Aorta (tissue), 5 donors: ENCODE measurements at regions of chr9 and their contacts with region 1.

Region 1: GRCh38 chr9:113993838-113994540 is 84.1 kb downstream of the AMBP start:
- DNase-seq: peak; percentile 95
- ATAC-seq: peak; percentile 69
- H3K4me3 ChIP-seq: no peak overlapping the region
- H3K27ac ChIP-seq: no peak overlapping the region
- H3K4me1 ChIP-seq: peaks cover 0 to 8% of the 10 kb centered on the region in 2 donors
- H3K27me3 ChIP-seq: no peaks in the 10 kb centered on the region

Region 2: GRCh38 chr9:112546149-112547012 is 1447.6 kb before region 1 on chr9:
- intact Hi-C with region 1: no loop called
- DNase-seq: no peak
- ATAC-seq: no peak
- H3K4me3 ChIP-seq: no peak overlapping the region
- H3K27ac ChIP-seq: no peak overlapping the region
- H3K4me1 ChIP-seq: peaks cover 0 to 2% of the 10 kb centered on the region in 2 donors
- H3K27me3 ChIP-seq: no peaks in the 10 kb centered on the region

Region 3: DNA sequence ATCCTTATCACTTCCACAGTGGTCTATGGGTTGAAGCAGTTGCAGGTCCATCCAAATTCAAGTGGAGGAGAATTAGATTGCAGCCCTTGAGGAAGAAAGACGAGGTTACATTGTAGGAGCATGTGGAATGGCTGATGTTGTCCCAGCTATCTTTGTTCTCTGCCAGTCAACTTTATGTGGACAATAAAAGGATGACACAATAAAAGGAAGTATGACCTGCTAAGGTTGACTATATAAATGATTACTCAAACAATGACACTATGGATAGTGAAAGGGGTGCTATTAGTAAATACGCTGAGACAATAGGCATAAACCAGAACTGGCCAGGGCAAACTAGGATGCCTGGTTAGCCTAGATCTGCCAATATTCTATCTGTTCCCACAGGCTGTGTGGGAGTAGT is 130.6 kb before region 1 on chr9:
- intact Hi-C with region 1: no loop called
- DNase-seq: no peak
- ATAC-seq: no peak
- H3K4me3 ChIP-seq: no peak overlapping the region
- H3K27ac ChIP-seq: no peak overlapping the region
- H3K4me1 ChIP-seq: no peaks in the 10 kb centered on the region
- H3K27me3 ChIP-seq: no peaks in the 10 kb centered on the region

Region 4: GRCh38 chr9:113919382-113919781 is 74.6 kb before region 1 on chr9:
- intact Hi-C with region 1: loop called in 1 of 2 experiments (anchors 5 kb)
- DNase-seq: peak in 1 of 2 donors; percentile 55
- ATAC-seq: peak; percentile 34
- H3K4me3 ChIP-seq: no peak overlapping the region
- H3K27ac ChIP-seq: no peak overlapping the region
- H3K4me1 ChIP-seq: peaks cover 0 to 7% of the 10 kb centered on the region in 2 donors
- H3K27me3 ChIP-seq: no peaks in the 10 kb centered on the region

Region 5: DNA sequence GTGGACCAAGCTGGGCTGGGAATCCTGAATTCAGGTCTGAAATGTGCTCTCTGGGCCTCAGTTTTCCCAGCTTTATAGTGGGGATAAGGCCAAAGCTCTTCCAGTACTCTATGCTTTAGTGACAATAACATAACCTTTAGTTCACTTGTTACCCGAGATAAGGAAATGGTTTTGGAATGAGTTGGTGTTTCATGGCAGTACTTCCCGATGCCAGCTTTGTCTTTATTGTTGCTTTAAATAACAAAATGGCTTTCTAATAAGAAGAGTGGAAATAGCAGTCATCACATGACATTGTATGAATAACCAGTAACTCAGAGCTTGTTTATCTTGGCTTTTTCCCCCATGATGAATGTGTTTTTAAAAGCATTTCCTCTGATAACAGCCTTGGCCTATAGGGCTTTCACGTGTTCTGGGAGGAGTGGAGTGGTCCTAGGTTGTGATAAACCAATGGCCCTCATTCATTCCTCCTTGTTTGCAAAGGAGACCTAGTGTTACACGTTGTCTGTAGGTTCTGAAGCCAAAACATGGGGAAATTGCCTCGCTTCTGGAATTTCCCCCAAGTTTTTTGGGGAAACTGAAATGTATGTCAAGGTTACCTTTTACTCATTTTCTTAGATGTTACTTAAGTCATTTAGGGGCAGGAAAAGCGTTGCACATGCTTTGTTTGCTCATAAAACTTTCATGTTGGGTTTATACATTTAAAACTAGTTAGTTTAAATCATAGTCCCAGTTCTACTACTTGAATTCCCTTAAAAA is 64.2 kb before region 1 on chr9:
- intact Hi-C with region 1: loop called in 1 of 2 experiments (anchors 5 kb)
- DNase-seq: no peak
- ATAC-seq: peak; percentile 71
- H3K4me3 ChIP-seq: no peak overlapping the region
- H3K27ac ChIP-seq: peak overlapping the region; percentile 12 to 64
- H3K4me1 ChIP-seq: peaks cover 4 to 15% of the 10 kb centered on the region in 2 donors
- H3K27me3 ChIP-seq: no peaks in the 10 kb centered on the region

Region 6: GRCh38 chr9:113957821-113958341 is 36.1 kb before region 1 on chr9:
- intact Hi-C with region 1: loop called (anchors 5 kb)
- DNase-seq: no peak
- ATAC-seq: no peak
- H3K4me3 ChIP-seq: no peak overlapping the region
- H3K27ac ChIP-seq: no peak overlapping the region
- H3K4me1 ChIP-seq: peaks cover 9 to 10% of the 10 kb centered on the region in 2 donors
- H3K27me3 ChIP-seq: no peaks in the 10 kb centered on the region

Region 7: DNA sequence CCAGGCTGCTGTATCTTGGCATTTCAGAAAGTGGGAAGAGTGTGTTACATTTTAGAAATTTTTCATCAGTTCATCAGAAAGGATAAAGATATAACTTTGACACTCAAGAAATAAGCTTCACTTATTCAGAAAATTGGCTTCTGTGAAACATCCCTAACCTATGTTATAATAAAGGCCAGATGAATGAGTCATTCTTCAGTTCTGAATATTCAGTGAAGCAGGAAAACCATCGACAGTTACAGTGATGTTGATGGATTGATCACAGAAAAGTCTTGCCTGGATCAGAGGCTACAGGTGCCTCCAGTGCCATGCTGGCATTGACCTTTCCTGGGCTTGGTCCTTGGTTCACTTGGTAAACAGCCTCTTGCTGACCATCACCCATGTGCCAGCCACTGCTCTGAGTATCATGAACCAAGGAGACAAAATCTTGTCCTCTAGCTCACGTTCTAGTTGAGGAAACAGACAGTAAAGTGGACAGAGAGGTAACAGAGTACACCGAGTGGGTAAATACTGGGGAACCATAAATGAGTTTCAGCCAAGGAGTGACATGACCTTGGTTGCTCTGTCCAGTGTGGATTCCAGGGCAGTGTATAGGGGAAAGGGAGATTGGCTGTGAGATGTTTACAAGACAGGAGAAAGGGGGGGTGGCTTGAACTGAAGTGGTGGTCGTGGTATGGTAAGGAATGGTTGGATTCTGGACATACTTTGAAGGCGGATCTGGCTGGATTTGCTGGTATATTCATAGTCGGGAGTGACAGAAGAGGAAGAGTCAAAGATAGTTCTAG is 14.5 kb before region 1 on chr9:
- intact Hi-C with region 1: no loop called
- DNase-seq: no peak
- ATAC-seq: no peak
- H3K4me3 ChIP-seq: no peak overlapping the region
- H3K27ac ChIP-seq: no peak overlapping the region
- H3K4me1 ChIP-seq: no peaks in the 10 kb centered on the region
- H3K27me3 ChIP-seq: no peaks in the 10 kb centered on the region

Region 8: DNA sequence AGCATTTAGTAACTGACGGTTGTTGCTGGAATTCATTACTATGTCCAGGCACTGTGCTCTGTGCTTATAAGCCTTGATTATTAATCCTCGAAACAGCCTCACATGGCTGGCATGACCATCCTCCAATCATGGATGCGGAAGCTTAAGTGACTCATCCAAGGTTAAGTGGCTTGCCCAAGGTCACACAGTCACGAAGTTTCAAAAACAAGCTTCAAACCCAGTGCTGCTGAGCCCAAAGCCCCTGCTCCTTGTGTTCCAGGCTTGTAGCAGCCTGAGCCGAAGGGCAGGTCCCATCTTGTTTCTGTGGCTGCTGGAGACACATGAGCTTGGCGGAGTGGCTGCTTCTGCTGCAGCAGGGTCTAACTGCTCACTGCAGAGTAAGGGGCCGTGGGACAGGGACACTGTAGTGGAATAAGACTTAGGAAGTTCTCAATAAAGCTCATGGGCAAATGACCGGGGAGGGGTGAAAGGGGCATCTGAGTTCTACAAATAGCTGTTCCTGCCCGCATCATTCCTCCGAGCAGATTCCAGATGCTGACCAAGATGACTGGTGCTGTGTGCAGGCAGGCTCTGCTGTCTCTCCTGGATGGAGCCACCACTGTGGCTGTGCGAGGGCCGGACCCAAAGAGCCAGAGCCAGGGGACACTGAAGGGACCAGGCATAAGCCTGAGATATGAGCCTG is 478.9 kb after region 1 on chr9:
- intact Hi-C with region 1: no loop called
- DNase-seq: no peak
- ATAC-seq: no peak
- H3K4me3 ChIP-seq: no peak overlapping the region
- H3K27ac ChIP-seq: no peak overlapping the region
- H3K4me1 ChIP-seq: no peaks in the 10 kb centered on the region
- H3K27me3 ChIP-seq: no peaks in the 10 kb centered on the region